ENCODE measurements at regions of chr7 and their contacts with region 1.

Region 1: GRCh38 chr7:6008668-6009611 is at the starts of genes AIMP2 and PMS2:
- DNase-seq: peak; percentile 82
- H3K4me3 ChIP-seq: peak within 1 kb of the TSS; percentile 91
- CTCF ChIP-seq: peak; percentile 6

Region 2: GRCh38 chr7:5997222-5997808 is 11.6 kb before region 1 on chr7:
- CTCF ChIA-PET with region 1: interaction called, 17 read pairs
- POLR2A ChIA-PET with region 1: no interaction called
- DNase-seq: no peak
- H3K4me3 ChIP-seq: no peak overlapping the region
- CTCF ChIP-seq: peak; percentile 62

Region 3: GRCh38 chr7:6186593-6186992 is 177.7 kb after region 1 on chr7:
- CTCF ChIA-PET with region 1: no interaction called
- POLR2A ChIA-PET with region 1: no interaction called
- DNase-seq: no peak
- H3K4me3 ChIP-seq: no peak overlapping the region
- CTCF ChIP-seq: no peak

Measured in AG04449 (cell line).